H1 (cell line): ENCODE measurements at regions of chr15 and their contacts with region 1.

Region 1: GRCh38 chr15:68795298-68795848 is 25.3 kb downstream of the ANP32A start:
- DNase-seq: peak; percentile 72 to 82
- H3K4me3 ChIP-seq: peak overlapping the region in 3 of 4 experiments; percentile 1 to 32 (median 7); a peak in 4 of 8 replicates
- H3K27ac ChIP-seq: peak overlapping the region; percentile 61
- H3K4me1 ChIP-seq: peaks cover 22 to 51% (median 40%) of the 10 kb centered on the region in 4 experiments
- H3K27me3 ChIP-seq: no peaks in the 10 kb centered on the region; a peak in 1 of 7 replicates
- CTCF ChIP-seq: no peak
- EP300 ChIP-seq: no peak
- POLR2A ChIP-seq: peak in 1 of 2 experiments; percentile 77; a peak in 2 of 3 replicates
- RAD21 ChIP-seq: no peak

Region 2: GRCh38 chr15:68817304-68818065 is 22.1 kb after region 1 on chr15:
- CTCF ChIA-PET with region 1: interaction called, 10 read pairs
- POLR2A ChIA-PET with region 1: interaction called, 54 read pairs
- DNase-seq: peak in 1 of 2 experiments; percentile 61
- H3K4me3 ChIP-seq: peak overlapping the region; percentile 72 to 94 (median 92)
- H3K27ac ChIP-seq: peak overlapping the region; percentile 74; the same call in 1 of the 2 replicates
- H3K4me1 ChIP-seq: peaks cover 10 to 22% (median 16%) of the 10 kb centered on the region in 4 experiments; a peak in 6 of 7 replicates
- H3K27me3 ChIP-seq: peaks cover 2 to 10% (median 7%) of the 10 kb centered on the region in 4 experiments
- CTCF ChIP-seq: no peak
- EP300 ChIP-seq: no peak
- POLR2A ChIP-seq: peak in 1 of 2 experiments; percentile 47; a peak in 1 of 3 replicates
- RAD21 ChIP-seq: no peak